ENCODE measurements at regions of chr17 and their contacts with region 1.

Region 1: DNA sequence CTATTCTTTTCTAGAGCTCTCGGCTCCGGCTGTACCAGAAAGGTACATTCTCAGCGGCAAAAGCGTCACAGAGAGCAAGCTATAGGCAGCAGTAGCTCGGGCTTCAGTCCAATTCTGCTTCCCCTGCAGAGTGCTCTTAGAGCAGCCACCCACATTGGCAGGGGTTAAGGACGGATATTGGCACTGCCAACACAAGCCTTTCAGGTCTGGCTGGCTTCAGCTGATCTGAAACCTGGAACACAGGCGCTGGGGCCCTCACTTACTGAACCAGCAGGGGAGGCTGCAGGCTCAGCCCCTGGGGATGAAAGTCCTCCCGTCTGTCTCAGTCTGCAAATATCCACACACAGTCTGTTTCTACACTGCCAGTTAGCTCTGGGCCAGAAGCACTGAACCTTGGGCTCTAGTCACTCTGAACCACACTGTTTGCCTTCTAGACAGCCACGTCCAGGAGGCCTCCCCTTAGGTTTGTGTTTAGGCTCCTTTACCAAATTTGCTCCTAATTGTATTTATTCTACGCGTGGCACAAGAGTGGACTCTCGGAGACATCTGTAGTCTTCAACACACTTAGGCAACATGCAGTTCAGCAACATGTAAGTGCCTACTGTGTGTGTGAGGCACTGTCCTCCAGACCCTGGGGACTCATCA is 40.1 kb downstream of the HIC1 start:
- DNase-seq: no peak
- ATAC-seq: peak; percentile 43
- H3K4me3 ChIP-seq: no peak overlapping the region
- H3K27ac ChIP-seq: no peak overlapping the region
- H3K4me1 ChIP-seq: peaks cover 26% of the 10 kb centered on the region
- H3K27me3 ChIP-seq: no peaks in the 10 kb centered on the region
- CTCF ChIP-seq: peak; percentile 36 to 68 (median 58); a peak in 5 of 6 replicates
- EP300 ChIP-seq: no peak
- POLR2A ChIP-seq: no peak
- RAD21 ChIP-seq: peak; percentile 79

Region 2: DNA sequence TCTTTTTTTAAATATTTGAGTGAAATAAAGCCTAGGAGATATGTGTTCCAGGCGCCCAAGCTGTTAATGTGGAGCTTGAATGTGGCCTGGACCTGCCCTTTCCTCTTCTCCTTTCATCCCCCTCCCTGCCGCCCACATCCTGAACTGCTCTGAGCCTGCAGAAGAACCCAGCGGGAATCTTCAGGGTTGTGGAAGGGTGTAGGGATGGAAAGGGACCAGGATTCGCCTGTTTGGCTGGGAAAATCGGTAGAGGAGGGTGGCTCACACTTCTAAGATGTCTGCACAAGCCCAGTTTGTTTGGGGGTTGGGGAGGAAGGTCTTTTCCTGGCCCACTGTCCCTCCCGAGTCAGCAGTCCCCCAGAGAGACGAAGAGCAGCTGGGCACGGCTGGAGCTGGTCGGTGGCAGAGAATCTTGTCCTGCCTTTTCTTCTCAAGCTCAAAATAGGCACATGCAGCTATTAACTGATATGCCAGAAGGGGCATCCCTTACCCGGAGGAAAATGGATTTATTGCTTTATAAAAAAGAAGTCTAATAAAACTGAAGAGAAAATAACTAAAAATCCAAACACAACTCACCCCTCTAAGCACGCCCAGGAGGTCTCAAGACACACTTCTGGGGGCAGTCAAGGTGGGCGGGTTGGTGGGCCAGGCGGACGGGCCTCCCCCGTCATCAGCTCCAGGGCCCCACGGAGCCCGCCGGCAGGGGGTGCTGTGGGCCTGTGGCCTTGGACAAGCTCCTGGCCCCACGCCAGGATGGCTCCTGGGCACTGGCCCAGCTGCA is 520.9 kb before region 1 on chr17:
- CTCF ChIA-PET with region 1: no interaction called
- POLR2A ChIA-PET with region 1: no interaction called
- RAD21 ChIA-PET with region 1: no interaction called
- SMC1A ChIA-PET with region 1: no interaction called
- in situ Hi-C with region 1: no loop called
- intact Hi-C with region 1: no loop called
- DNase-seq: no peak
- ATAC-seq: peak; percentile 82
- H3K4me3 ChIP-seq: no peak overlapping the region
- H3K27ac ChIP-seq: no peak overlapping the region
- H3K4me1 ChIP-seq: peaks cover 10% of the 10 kb centered on the region
- H3K27me3 ChIP-seq: no peaks in the 10 kb centered on the region
- CTCF ChIP-seq: peak; percentile 85 to 95 (median 90)
- EP300 ChIP-seq: no peak
- POLR2A ChIP-seq: no peak
- RAD21 ChIP-seq: peak; percentile 92

Region 3: GRCh38 chr17:2070241-2071023 is 24.6 kb before region 1 on chr17:
- CTCF ChIA-PET with region 1: interaction called, 51 read pairs
- POLR2A ChIA-PET with region 1: interaction called, 148 read pairs
- RAD21 ChIA-PET with region 1: interaction called, 85 read pairs
- SMC1A ChIA-PET with region 1: interaction called, 107 read pairs
- in situ Hi-C with region 1: no loop called
- intact Hi-C with region 1: no loop called
- DNase-seq: peak; percentile 96
- ATAC-seq: peak; percentile 93
- H3K4me3 ChIP-seq: peak overlapping the region; percentile 1; the same call in 1 of the 2 replicates
- H3K27ac ChIP-seq: peak overlapping the region; percentile 95
- H3K4me1 ChIP-seq: peaks cover 43% of the 10 kb centered on the region
- H3K27me3 ChIP-seq: no peaks in the 10 kb centered on the region
- CTCF ChIP-seq: peak in 2 of 3 experiments; percentile 7 to 22; a peak in 1 of 6 replicates
- EP300 ChIP-seq: peak; percentile 96 to 99
- POLR2A ChIP-seq: peak; percentile 79
- RAD21 ChIP-seq: 0 out of 2 replicates have a peak, but pooled peaks have one; percentile 0

Region 4: GRCh38 chr17:2137342-2138098 is 42.5 kb after region 1 on chr17:
- CTCF ChIA-PET with region 1: interaction called, 7 read pairs
- POLR2A ChIA-PET with region 1: interaction called, 45 read pairs
- RAD21 ChIA-PET with region 1: interaction called, 71 read pairs
- SMC1A ChIA-PET with region 1: interaction called, 78 read pairs
- in situ Hi-C with region 1: no loop called
- intact Hi-C with region 1: no loop called
- DNase-seq: peak; percentile 51
- ATAC-seq: peak; percentile 86
- H3K4me3 ChIP-seq: no peak overlapping the region; the same call in 1 of the 2 replicates
- H3K27ac ChIP-seq: peak overlapping the region; percentile 87
- H3K4me1 ChIP-seq: peaks cover 41% of the 10 kb centered on the region
- H3K27me3 ChIP-seq: no peaks in the 10 kb centered on the region
- CTCF ChIP-seq: no peak
- EP300 ChIP-seq: no peak
- POLR2A ChIP-seq: peak; percentile 23; the same call in 1 of the 2 replicates
- RAD21 ChIP-seq: no peak

Region 5: DNA sequence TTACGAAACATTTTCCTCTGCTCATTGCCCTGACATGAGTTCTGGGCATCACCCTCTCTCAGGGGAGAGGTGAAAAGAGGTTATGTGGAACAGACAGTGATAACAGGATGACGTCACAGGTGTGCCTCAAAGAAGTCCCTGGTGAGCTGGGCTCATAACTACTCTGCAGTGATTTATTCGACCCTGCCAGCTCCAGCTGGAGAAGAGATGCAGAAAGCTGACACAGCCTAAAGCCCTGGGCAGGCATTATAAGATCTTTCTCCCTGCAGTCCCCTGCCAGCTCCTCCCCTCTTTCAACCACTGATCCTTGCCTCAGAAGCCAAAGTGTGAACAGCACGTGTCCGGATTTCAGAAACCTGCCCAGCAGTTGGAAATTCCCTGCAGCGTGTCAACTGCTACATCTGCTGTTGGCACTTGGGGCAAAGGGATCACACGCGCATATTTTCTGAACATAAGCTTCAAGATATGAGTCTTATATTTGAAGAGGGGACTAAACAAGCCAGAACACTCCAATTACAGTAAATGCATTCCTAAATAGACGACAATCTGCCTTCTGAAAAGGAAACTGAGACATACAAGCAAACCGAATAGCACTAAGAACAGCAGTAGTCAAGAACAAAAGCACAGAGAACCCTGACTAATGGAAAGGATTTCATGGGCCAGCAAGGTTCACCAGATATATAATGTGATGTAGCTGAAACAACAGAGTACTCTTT is 128.0 kb after region 1 on chr17:
- CTCF ChIA-PET with region 1: interaction called, 11 read pairs
- POLR2A ChIA-PET with region 1: interaction called, 12 read pairs
- RAD21 ChIA-PET with region 1: interaction called, 27 read pairs
- SMC1A ChIA-PET with region 1: interaction called, 44 read pairs
- in situ Hi-C with region 1: no loop called
- intact Hi-C with region 1: no loop called
- DNase-seq: peak; percentile 81
- ATAC-seq: peak; percentile 95
- H3K4me3 ChIP-seq: peak overlapping the region; percentile 29; the same call in 1 of the 2 replicates
- H3K27ac ChIP-seq: peak overlapping the region; percentile 87
- H3K4me1 ChIP-seq: peaks cover 30% of the 10 kb centered on the region
- H3K27me3 ChIP-seq: no peaks in the 10 kb centered on the region
- CTCF ChIP-seq: no peak
- EP300 ChIP-seq: peak; percentile 69 to 88
- POLR2A ChIP-seq: peak; percentile 13; the same call in 1 of the 2 replicates
- RAD21 ChIP-seq: 0 out of 2 replicates have a peak, but pooled peaks have one; percentile 8

Region 6: GRCh38 chr17:2253768-2254406 is 158.9 kb after region 1 on chr17:
- CTCF ChIA-PET with region 1: interaction called, 4 read pairs
- POLR2A ChIA-PET with region 1: interaction called, 69 read pairs
- RAD21 ChIA-PET with region 1: interaction called, 39 read pairs
- SMC1A ChIA-PET with region 1: interaction called, 28 read pairs
- in situ Hi-C with region 1: no loop called
- intact Hi-C with region 1: no loop called
- DNase-seq: peak; percentile 90
- ATAC-seq: peak; percentile 97
- H3K4me3 ChIP-seq: peak overlapping the region; percentile 36; the same call in 1 of the 2 replicates
- H3K27ac ChIP-seq: peak overlapping the region; percentile 90
- H3K4me1 ChIP-seq: peaks cover 36% of the 10 kb centered on the region
- H3K27me3 ChIP-seq: no peaks in the 10 kb centered on the region
- CTCF ChIP-seq: no peak
- EP300 ChIP-seq: peak; percentile 91 to 95
- POLR2A ChIP-seq: peak; percentile 37; the same call in 1 of the 2 replicates
- RAD21 ChIP-seq: peak; percentile 12; the same call in 1 of the 2 replicates

Region 7: GRCh38 chr17:2266045-2266864 is 171.2 kb after region 1 on chr17:
- CTCF ChIA-PET with region 1: interaction called, 9 read pairs
- POLR2A ChIA-PET with region 1: interaction called, 69 read pairs
- RAD21 ChIA-PET with region 1: interaction called, 61 read pairs
- SMC1A ChIA-PET with region 1: interaction called, 50 read pairs
- in situ Hi-C with region 1: no loop called
- intact Hi-C with region 1: no loop called
- DNase-seq: peak; percentile 97
- ATAC-seq: peak; percentile 90
- H3K4me3 ChIP-seq: peak overlapping the region; percentile 28; the same call in 1 of the 2 replicates
- H3K27ac ChIP-seq: peak overlapping the region; percentile 99
- H3K4me1 ChIP-seq: peaks cover 61% of the 10 kb centered on the region
- H3K27me3 ChIP-seq: no peaks in the 10 kb centered on the region
- CTCF ChIP-seq: no peak
- EP300 ChIP-seq: peak; percentile 58 to 87; a peak in 3 of 4 replicates
- POLR2A ChIP-seq: peak; percentile 64
- RAD21 ChIP-seq: peak; percentile 16; the same call in 1 of the 2 replicates

Measured in GM12878 (cell line).